Activated T-helper 1 cell treated with anti-CD3 and anti-CD28 coated beads, Interleukin-12 subunit alpha, Interleukin-12 subunit beta, Interleukin-2, Interleukin-4 antibody, amounts not matched to agents 30 ng/mL and 10 ng/mL and 1 ng/mL, durations not matched to agents 14 hours and 24 hours and 36 hours (primary cell): ENCODE measurements at regions of chr10 and their contacts with region 1.

Region 1: DNA sequence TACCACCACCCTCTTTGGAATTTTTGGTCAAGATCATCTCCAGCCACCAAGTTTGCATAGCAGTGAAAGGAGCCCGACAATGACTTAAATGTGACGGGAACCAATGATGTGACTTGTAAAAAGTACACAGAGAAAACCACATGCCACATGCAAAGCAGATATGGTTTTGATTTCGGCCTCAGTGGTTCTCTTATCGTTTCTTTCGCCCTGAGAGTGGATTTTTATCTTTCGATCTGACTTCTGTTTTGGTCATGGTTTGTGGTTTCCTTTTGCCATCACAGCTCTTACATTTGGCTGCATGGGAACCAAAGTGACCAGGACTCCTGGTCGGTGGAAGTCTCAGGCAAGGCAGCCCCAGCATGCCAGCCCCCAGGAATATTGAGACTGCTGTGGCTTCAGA is 31.5 kb downstream of the TCF7L2 start:
- DNase-seq: peak; percentile 8
- H3K4me3 Mint-ChIP-seq: no peak overlapping the region
- H3K27ac Mint-ChIP-seq: peak overlapping the region; percentile 75
- H3K4me1 Mint-ChIP-seq: peaks cover 9% of the 10 kb centered on the region
- H3K27me3 Mint-ChIP-seq: peaks cover 74% of the 10 kb centered on the region

Region 2: DNA sequence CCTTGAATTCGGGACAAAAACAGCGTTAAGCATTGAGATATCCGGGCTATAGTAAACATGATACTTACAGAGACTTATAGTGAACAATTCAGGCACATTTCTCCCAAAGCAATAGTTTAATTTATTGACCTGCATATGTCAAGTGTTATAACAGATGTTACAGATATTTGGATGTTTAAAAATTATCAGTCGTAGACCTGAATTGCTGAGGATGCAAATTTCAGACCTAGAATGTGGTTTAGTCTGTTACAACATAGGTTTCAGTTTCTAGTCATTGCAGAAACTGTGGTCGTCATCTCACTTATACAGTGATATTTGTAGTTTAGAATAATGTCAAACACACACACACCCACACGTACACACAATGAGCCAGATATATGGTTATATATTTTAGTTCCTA is 449.4 kb before region 1 on chr10:
- intact Hi-C with region 1: loop called (anchors 1 kb)
- DNase-seq: no peak
- H3K4me3 Mint-ChIP-seq: peak overlapping the region; percentile 53
- H3K27ac Mint-ChIP-seq: peak overlapping the region; percentile 11
- H3K4me1 Mint-ChIP-seq: peaks cover 26% of the 10 kb centered on the region
- H3K27me3 Mint-ChIP-seq: peaks cover 8% of the 10 kb centered on the region

Region 3: DNA sequence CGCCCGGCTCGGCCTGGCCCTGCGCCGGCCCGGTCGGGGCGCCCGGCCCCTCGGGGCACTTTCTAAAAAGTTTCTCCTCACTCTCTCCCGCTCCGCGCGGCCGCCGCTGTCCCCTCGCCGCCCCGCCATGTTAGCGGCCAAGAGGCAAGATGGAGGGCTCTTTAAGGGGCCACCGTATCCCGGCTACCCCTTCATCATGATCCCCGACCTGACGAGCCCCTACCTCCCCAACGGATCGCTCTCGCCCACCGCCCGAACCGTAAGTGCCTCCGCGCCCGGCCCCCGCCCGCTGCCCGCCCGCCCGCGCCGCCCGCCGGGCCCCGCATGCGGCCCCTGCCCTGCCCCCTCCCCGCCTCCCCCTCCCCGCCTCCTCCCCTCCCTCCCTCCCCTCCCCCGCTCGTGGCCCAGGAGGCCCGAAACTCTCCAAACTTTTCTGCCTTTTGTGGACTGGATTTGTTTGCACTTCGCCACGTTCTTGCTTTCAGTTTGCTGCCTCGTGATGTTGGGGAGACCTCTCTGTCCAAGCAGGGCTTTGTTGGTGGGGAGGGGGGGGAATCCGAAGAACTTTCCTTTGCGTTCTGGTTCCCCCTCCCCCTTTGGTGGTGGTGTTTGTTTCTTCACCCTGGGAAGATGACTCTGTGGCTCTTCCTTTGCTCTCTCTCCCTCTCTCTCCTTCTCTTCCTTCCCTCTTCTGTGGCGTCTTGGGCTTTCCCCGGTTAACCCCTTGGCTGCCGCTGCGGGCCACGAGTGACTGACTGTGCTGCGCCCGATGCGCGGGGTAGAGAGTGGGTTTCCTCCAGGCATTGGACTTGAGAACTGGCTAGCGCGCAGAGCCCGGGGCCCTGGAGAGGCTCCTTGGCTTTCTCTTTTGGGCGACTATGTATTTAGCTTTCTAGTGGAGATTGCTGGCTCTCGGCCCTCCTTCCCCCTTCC is 29.9 kb before region 1 on chr10:
- intact Hi-C with region 1: loop called (anchors 1 kb)
- DNase-seq: peak; percentile 3
- H3K4me3 Mint-ChIP-seq: peak overlapping the region; percentile 90
- H3K27ac Mint-ChIP-seq: peak overlapping the region; percentile 68
- H3K4me1 Mint-ChIP-seq: peaks cover 32% of the 10 kb centered on the region
- H3K27me3 Mint-ChIP-seq: peaks cover 80% of the 10 kb centered on the region

Region 4: GRCh38 chr10:113007032-113007771 is 25.6 kb after region 1 on chr10:
- intact Hi-C with region 1: loop called (anchors 1 kb)
- DNase-seq: peak; percentile 8
- H3K4me3 Mint-ChIP-seq: peak overlapping the region; percentile 56
- H3K27ac Mint-ChIP-seq: no peak overlapping the region
- H3K4me1 Mint-ChIP-seq: peaks cover 22% of the 10 kb centered on the region
- H3K27me3 Mint-ChIP-seq: peaks cover 48% of the 10 kb centered on the region